ENCODE measurements at regions of chr15 and their contacts with region 1.

Region 1: GRCh38 chr15:82139823-82140268 is 94.0 kb upstream of the MEX3B start:
- DNase-seq: no peak
- ATAC-seq: peak in 1 of 8 donors; percentile 28
- H3K4me3 ChIP-seq: no peak overlapping the region
- H3K27ac ChIP-seq: no peak overlapping the region
- H3K4me1 ChIP-seq: peaks cover 0 to 14% (median 0%) of the 10 kb centered on the region in 9 donors
- H3K27me3 ChIP-seq: no peaks in the 10 kb centered on the region
- CTCF ChIP-seq: peak; percentile 56 to 81 (median 71)

Region 2: GRCh38 chr15:81265944-81266775 is 873.7 kb before region 1 on chr15:
- intact Hi-C with region 1: no loop called
- DNase-seq: peak; percentile 80 to 81
- ATAC-seq: peak; percentile 87 to 96 (median 94)
- H3K4me3 ChIP-seq: peak overlapping the region in 2 of 10 donors; percentile 27 to 29
- H3K27ac ChIP-seq: no peak overlapping the region
- H3K4me1 ChIP-seq: peaks cover 0 to 30% (median 15%) of the 10 kb centered on the region in 9 donors
- H3K27me3 ChIP-seq: peaks cover 0 to 6% (median 0%) of the 10 kb centered on the region in 7 donors
- CTCF ChIP-seq: peak; percentile 81 to 93 (median 86)

Region 3: GRCh38 chr15:81410318-81410753 is 729.5 kb before region 1 on chr15:
- intact Hi-C with region 1: loop called in 1 of 10 experiments (anchors 5 kb)
- DNase-seq: peak; percentile 18 to 29
- ATAC-seq: peak; percentile 61 to 96 (median 84)
- H3K4me3 ChIP-seq: no peak overlapping the region
- H3K27ac ChIP-seq: no peak overlapping the region
- H3K4me1 ChIP-seq: peaks cover 0 to 14% (median 8%) of the 10 kb centered on the region in 9 donors
- H3K27me3 ChIP-seq: no peaks in the 10 kb centered on the region
- CTCF ChIP-seq: peak in 8 of 9 donors; percentile 45 to 67 (median 57)

Region 4: GRCh38 chr15:81473177-81473576 is 666.7 kb before region 1 on chr15:
- intact Hi-C with region 1: loop called in 1 of 10 experiments (anchors 10 kb)
- DNase-seq: no peak
- ATAC-seq: peak in 2 of 8 donors; percentile 28 to 65
- H3K4me3 ChIP-seq: no peak overlapping the region
- H3K27ac ChIP-seq: no peak overlapping the region
- H3K4me1 ChIP-seq: peaks cover 0 to 18% (median 0%) of the 10 kb centered on the region in 9 donors
- H3K27me3 ChIP-seq: no peaks in the 10 kb centered on the region
- CTCF ChIP-seq: no peak

Region 5: GRCh38 chr15:81480645-81481053 is 659.2 kb before region 1 on chr15:
- intact Hi-C with region 1: loop called in 5 of 10 experiments (anchors 5 to 10 kb)
- DNase-seq: peak in 1 of 2 donors; percentile 70
- ATAC-seq: peak in 7 of 8 donors; percentile 64 to 74 (median 71)
- H3K4me3 ChIP-seq: peak overlapping the region in 1 of 10 donors; percentile 2
- H3K27ac ChIP-seq: no peak overlapping the region
- H3K4me1 ChIP-seq: peaks cover 0 to 5% (median 0%) of the 10 kb centered on the region in 9 donors
- H3K27me3 ChIP-seq: no peaks in the 10 kb centered on the region
- CTCF ChIP-seq: peak; percentile 80 to 97 (median 86)

Region 6: DNA sequence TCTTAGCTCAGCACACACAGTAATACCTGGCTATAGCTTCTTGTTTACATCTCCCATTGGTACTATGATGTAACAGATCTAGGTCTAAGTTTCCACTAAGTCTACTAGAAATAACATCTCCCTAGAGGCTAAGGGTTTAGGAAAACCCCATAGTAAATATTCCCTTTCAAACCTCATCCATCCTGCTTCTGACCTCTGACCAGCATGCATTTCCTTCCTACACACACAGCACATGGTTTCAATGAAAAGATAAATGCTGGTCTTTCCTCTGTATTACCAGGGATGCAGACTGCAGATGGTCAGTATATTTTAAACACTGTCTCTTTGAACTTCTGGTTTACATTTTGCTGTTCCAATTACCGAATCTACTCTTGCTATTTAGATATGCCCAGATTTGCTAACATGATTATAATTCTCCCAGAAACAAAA is 26.1 kb after region 1 on chr15:
- intact Hi-C with region 1: no loop called
- DNase-seq: no peak
- ATAC-seq: no peak
- H3K4me3 ChIP-seq: no peak overlapping the region
- H3K27ac ChIP-seq: no peak overlapping the region
- H3K4me1 ChIP-seq: peaks cover 0 to 5% (median 0%) of the 10 kb centered on the region in 9 donors
- H3K27me3 ChIP-seq: no peaks in the 10 kb centered on the region
- CTCF ChIP-seq: no peak

Measured in heart right ventricle (tissue), 16 donors.